ENCODE measurements at regions of chr11 and their contacts with region 1.

Region 1: GRCh38 chr11:113730887-113731726 is 25.0 kb upstream of the TMPRSS5 start:
- DNase-seq: peak; percentile 39
- ATAC-seq: peak; percentile 72
- H3K4me3 ChIP-seq: no peak overlapping the region
- H3K27ac ChIP-seq: no peak overlapping the region
- H3K4me1 ChIP-seq: no peaks in the 10 kb centered on the region
- H3K27me3 ChIP-seq: no peaks in the 10 kb centered on the region
- CTCF ChIP-seq: peak; percentile 34 to 54 (median 47); a peak in 4 of 6 replicates
- POLR2A ChIP-seq: no peak
- RAD21 ChIP-seq: peak; percentile 82

Region 2: DNA sequence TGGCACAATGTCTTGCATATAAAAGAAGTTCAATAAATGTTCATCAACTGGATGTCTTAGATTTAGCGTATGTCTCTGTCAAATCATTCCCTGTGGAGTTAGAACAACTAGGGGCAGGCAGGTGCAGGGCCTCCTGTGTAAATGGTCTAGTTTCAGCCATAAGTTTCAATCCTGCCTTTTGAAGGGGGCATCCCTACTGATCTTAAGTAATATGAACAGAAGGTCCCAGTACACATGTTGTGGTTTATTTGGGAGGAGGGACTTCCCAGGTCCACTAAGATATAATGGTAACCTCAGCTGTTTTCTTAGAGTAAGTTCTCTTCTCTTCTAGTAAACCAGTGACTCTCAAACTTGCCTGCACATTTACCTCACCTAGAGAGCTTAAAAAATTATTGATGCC is 396.9 kb before region 1 on chr11:
- CTCF ChIA-PET with region 1: no interaction called
- POLR2A ChIA-PET with region 1: no interaction called
- RAD21 ChIA-PET with region 1: no interaction called
- intact Hi-C with region 1: no loop called
- DNase-seq: no peak
- ATAC-seq: no peak
- H3K4me3 ChIP-seq: no peak overlapping the region
- H3K27ac ChIP-seq: no peak overlapping the region
- H3K4me1 ChIP-seq: peaks cover 0 to 5% of the 10 kb centered on the region in 2 experiments; a peak in 1 of 4 replicates
- H3K27me3 ChIP-seq: no peaks in the 10 kb centered on the region
- CTCF ChIP-seq: no peak
- POLR2A ChIP-seq: no peak
- RAD21 ChIP-seq: no peak

Region 3: GRCh38 chr11:113532697-113533424 is 198.2 kb before region 1 on chr11:
- CTCF ChIA-PET with region 1: no interaction called
- POLR2A ChIA-PET with region 1: no interaction called
- RAD21 ChIA-PET with region 1: interaction called in 1 of 2 experiments, 3 read pairs
- intact Hi-C with region 1: loop called (anchors 2 kb)
- DNase-seq: peak; percentile 49
- ATAC-seq: peak; percentile 93
- H3K4me3 ChIP-seq: no peak overlapping the region
- H3K27ac ChIP-seq: no peak overlapping the region
- H3K4me1 ChIP-seq: peaks cover 0 to 3% of the 10 kb centered on the region in 2 experiments; a peak in 1 of 4 replicates
- H3K27me3 ChIP-seq: peaks cover 36% of the 10 kb centered on the region
- CTCF ChIP-seq: peak; percentile 72 to 95 (median 88)
- POLR2A ChIP-seq: no peak
- RAD21 ChIP-seq: peak; percentile 82

Region 4: DNA sequence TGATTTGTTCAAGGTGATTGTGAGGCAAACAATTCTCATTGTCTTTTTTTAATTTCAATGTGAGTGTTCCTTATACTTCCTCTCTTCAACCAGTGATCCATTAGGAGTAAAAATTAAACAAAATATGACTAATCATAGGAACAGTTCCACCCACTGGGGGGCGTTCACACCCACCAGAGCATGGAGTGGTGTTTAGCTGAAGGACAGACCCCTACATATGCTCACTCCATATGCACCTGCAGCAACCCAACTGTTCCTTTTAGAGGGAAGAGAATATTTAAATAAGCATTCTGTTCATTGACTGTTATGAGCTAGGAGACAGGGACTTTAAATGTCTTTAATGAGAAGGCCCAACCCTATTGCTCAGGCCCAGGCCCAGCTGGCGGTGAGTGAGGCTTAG is 177.2 kb before region 1 on chr11:
- CTCF ChIA-PET with region 1: interaction called, 9 read pairs
- POLR2A ChIA-PET with region 1: no interaction called
- RAD21 ChIA-PET with region 1: interaction called in 1 of 2 experiments, 3 read pairs
- intact Hi-C with region 1: loop called (anchors 1 kb)
- DNase-seq: no peak
- ATAC-seq: no peak
- H3K4me3 ChIP-seq: no peak overlapping the region
- H3K27ac ChIP-seq: no peak overlapping the region
- H3K4me1 ChIP-seq: peaks cover 11 to 16% of the 10 kb centered on the region in 2 experiments
- H3K27me3 ChIP-seq: no peaks in the 10 kb centered on the region
- CTCF ChIP-seq: peak in 2 of 3 experiments; percentile 26; a peak in 3 of 6 replicates
- POLR2A ChIP-seq: no peak
- RAD21 ChIP-seq: peak; percentile 27; the same call in 1 of the 2 replicates

Region 5: GRCh38 chr11:113760241-113760640 is 29.1 kb after region 1 on chr11:
- CTCF ChIA-PET with region 1: no interaction called
- POLR2A ChIA-PET with region 1: no interaction called
- RAD21 ChIA-PET with region 1: no interaction called
- intact Hi-C with region 1: no loop called
- DNase-seq: no peak
- ATAC-seq: no peak
- H3K4me3 ChIP-seq: no peak overlapping the region
- H3K27ac ChIP-seq: no peak overlapping the region
- H3K4me1 ChIP-seq: no peaks in the 10 kb centered on the region
- H3K27me3 ChIP-seq: no peaks in the 10 kb centered on the region
- CTCF ChIP-seq: no peak
- POLR2A ChIP-seq: no peak
- RAD21 ChIP-seq: no peak